Testis (tissue), 5 donors: ENCODE measurements at regions of chr11 and their contacts with region 1.

Region 1: GRCh38 chr11:45233121-45233803 is 52.9 kb downstream of the SYT13 start:
- DNase-seq: peak; percentile 77
- H3K4me3 ChIP-seq: no peak overlapping the region
- H3K27ac ChIP-seq: no peak overlapping the region
- H3K4me1 ChIP-seq: no peaks in the 10 kb centered on the region
- H3K27me3 ChIP-seq: no peaks in the 10 kb centered on the region
- CTCF ChIP-seq: peak; percentile 31 to 83 (median 37)
- POLR2A ChIP-seq: no peak

Region 2: GRCh38 chr11:45180179-45180842 is 53.0 kb before region 1 on chr11:
- intact Hi-C with region 1: loop called (anchors 10 kb)
- DNase-seq: peak; percentile 51
- H3K4me3 ChIP-seq: peak overlapping the region; percentile 51 to 58
- H3K27ac ChIP-seq: peak overlapping the region in 1 of 2 donors; percentile 60
- H3K4me1 ChIP-seq: peaks cover 17% of the 10 kb centered on the region
- H3K27me3 ChIP-seq: no peaks in the 10 kb centered on the region
- CTCF ChIP-seq: peak in 2 of 3 experiments; percentile 24 to 26
- POLR2A ChIP-seq: no peak